Heart right ventricle (tissue), 16 donors: ENCODE measurements at regions of chr2 and their contacts with region 1.

Region 1: DNA sequence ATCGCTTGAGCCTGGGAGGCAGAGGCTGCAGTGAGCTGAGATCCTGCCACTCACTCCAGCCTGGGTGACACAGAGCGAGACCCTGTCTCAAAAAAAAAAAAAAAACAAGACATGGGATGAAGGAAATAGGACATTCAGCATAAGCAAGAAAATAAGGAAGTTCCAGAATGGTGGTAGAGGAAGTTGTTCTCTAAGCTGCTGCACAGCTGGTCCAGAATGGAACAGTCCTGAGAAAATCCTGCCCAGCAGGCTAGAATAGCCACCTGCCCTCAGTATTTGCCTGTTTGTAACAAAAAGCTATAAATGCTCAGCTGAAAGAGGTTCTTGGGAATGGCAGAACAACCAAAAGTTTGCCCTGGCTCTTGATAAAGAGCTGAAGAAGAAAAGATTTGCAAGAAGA is 11.1 kb upstream of the MAPRE3 start:
- DNase-seq: no peak
- ATAC-seq: peak in 1 of 8 donors; percentile 36
- H3K4me3 ChIP-seq: no peak overlapping the region
- H3K27ac ChIP-seq: no peak overlapping the region
- H3K4me1 ChIP-seq: peaks cover 0 to 16% (median 0%) of the 10 kb centered on the region in 9 donors
- H3K27me3 ChIP-seq: peaks cover 0 to 69% (median 43%) of the 10 kb centered on the region in 7 donors
- CTCF ChIP-seq: no peak

Region 2: DNA sequence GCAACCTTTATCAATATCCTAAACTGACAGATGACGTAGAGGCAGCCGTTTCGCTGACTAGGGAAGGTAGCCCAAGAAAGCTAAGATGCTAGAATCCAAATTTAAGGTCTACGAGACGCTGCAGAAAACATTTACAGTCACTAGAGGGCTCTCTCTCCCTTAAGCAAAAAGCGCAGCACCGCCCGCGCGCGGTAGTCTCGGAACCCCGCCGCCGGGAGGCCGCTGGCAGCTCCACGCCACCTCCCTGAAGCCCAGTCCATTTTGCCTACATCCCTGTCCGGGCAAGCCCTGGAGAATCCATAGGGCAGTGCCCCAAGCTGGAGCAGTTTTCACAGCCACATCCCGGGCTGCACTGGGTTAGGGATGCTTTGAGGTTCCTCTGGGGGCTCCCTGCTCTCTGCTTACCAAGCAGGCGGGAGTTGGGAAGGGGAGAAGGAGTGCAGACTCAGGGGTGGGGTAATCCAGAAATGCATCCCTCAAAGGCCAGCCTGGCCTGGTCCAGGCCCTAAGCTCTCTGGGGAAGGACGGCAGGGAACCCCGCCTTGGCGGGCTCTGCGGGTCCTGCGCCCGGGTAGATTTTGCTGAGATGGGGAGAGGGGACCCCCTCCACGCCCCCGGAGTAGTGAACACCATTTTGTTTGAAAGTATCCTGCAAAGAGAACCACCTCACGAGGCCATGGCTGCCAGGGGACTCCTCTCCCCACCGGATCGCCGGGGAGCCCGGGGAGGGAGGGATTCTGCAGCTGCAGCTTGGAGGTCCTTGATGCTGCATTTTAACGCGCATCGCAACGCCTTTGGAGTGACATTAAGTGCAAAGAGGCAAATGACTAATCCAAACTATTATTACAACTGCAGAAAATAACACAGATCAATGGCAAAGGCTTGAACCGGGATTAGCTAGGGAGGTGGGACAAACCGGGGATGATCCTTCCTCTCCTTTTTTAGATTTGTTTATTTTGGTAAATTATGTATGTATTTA is 112.7 kb before region 1 on chr2:
- intact Hi-C with region 1: no loop called
- DNase-seq: peak; percentile 55 to 72
- ATAC-seq: peak; percentile 67 to 90 (median 80)
- H3K4me3 ChIP-seq: peak overlapping the region in 1 of 10 donors; percentile 18
- H3K27ac ChIP-seq: no peak overlapping the region
- H3K4me1 ChIP-seq: peaks cover 12 to 43% (median 38%) of the 10 kb centered on the region in 9 donors
- H3K27me3 ChIP-seq: peaks cover 42 to 99% (median 92%) of the 10 kb centered on the region in 7 donors
- CTCF ChIP-seq: peak; percentile 67 to 88 (median 80)

Region 3: GRCh38 chr2:27007416-27008374 is 48.4 kb after region 1 on chr2:
- intact Hi-C with region 1: no loop called
- DNase-seq: no peak
- ATAC-seq: no peak
- H3K4me3 ChIP-seq: no peak overlapping the region
- H3K27ac ChIP-seq: peak overlapping the region in 1 of 10 donors; percentile 12
- H3K4me1 ChIP-seq: peaks cover 0 to 29% (median 8%) of the 10 kb centered on the region in 9 donors
- H3K27me3 ChIP-seq: no peaks in the 10 kb centered on the region
- CTCF ChIP-seq: no peak

Region 4: GRCh38 chr2:27079233-27080139 is 120.2 kb after region 1 on chr2:
- intact Hi-C with region 1: loop called in 5 of 10 experiments (anchors 2 to 10 kb)
- DNase-seq: no peak
- ATAC-seq: no peak
- H3K4me3 ChIP-seq: peak overlapping the region; percentile 26 to 68 (median 60)
- H3K27ac ChIP-seq: peak overlapping the region; percentile 76 to 90 (median 86)
- H3K4me1 ChIP-seq: peaks cover 4 to 70% (median 52%) of the 10 kb centered on the region in 9 donors
- H3K27me3 ChIP-seq: no peaks in the 10 kb centered on the region
- CTCF ChIP-seq: no peak

Region 5: DNA sequence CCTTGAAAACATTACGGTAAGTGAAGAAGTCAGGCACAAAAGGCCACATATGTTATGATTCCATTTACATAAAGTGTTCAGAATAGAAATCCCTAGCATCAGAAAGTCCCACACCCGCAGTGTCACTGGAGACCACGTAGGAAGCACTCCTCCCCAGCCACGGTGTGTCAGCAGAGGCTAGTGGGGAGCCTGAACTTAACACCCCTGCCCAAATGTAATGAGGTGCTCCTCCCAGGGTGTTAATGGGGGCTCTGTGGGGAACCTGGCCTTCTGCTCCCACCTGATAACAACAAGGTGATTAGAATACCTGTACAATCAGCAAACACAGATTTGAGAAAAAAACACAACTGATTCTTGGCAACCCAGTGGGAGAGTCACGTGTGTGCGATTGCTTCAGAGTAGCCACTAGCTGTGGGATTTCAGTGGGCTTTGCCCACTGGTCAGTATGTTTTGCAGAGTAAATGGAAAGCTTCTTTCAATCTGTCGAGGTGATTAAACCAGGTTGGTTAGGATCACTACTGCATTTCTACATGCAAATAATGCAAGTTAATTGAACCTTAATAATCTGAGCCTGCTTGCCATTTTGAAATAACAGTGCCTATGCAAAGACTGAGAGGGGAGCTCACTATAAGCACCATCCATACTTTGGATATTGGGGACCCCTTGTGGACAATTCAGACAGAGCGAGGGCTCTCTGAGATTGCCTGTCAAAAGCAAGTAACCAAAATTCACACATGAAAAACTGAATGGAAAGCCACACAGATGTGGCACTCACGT is 231.9 kb after region 1 on chr2:
- intact Hi-C with region 1: loop called in 3 of 10 experiments (anchors 5 to 10 kb)
- DNase-seq: peak in 1 of 2 donors; percentile 44
- ATAC-seq: peak; percentile 46 to 82 (median 70)
- H3K4me3 ChIP-seq: no peak overlapping the region
- H3K27ac ChIP-seq: no peak overlapping the region
- H3K4me1 ChIP-seq: peaks cover 0 to 2% (median 0%) of the 10 kb centered on the region in 9 donors
- H3K27me3 ChIP-seq: peaks cover 0 to 4% (median 0%) of the 10 kb centered on the region in 7 donors
- CTCF ChIP-seq: peak; percentile 30 to 71 (median 60)

Region 6: GRCh38 chr2:27264753-27265535 is 305.6 kb after region 1 on chr2:
- intact Hi-C with region 1: loop called in 1 of 10 experiments (anchors 10 kb)
- DNase-seq: peak; percentile 71 to 77
- ATAC-seq: peak; percentile 68 to 88 (median 80)
- H3K4me3 ChIP-seq: peak overlapping the region in 9 of 10 donors; percentile 30 to 68 (median 63)
- H3K27ac ChIP-seq: peak overlapping the region in 8 of 10 donors; percentile 34 to 77 (median 48)
- H3K4me1 ChIP-seq: peaks cover 0 to 47% (median 34%) of the 10 kb centered on the region in 9 donors
- H3K27me3 ChIP-seq: peaks cover 0 to 97% (median 52%) of the 10 kb centered on the region in 7 donors
- CTCF ChIP-seq: peak in 8 of 9 donors; percentile 30 to 74 (median 57)